GM12878 (cell line): ENCODE measurements at regions of chr1 and their contacts with region 1.

Region 1: GRCh38 chr1:91803847-91804545 is 82.0 kb downstream of the TGFBR3 start:
- DNase-seq: peak; percentile 95
- ATAC-seq: peak; percentile 87
- H3K4me3 ChIP-seq: no peak overlapping the region
- H3K27ac ChIP-seq: peak overlapping the region; percentile 81
- H3K4me1 ChIP-seq: peaks cover 29% of the 10 kb centered on the region
- H3K27me3 ChIP-seq: no peaks in the 10 kb centered on the region
- CTCF ChIP-seq: no peak
- EP300 ChIP-seq: peak in 1 of 2 experiments; percentile 26; a peak in 2 of 4 replicates
- POLR2A ChIP-seq: peak; percentile 51
- RAD21 ChIP-seq: no peak

Region 2: DNA sequence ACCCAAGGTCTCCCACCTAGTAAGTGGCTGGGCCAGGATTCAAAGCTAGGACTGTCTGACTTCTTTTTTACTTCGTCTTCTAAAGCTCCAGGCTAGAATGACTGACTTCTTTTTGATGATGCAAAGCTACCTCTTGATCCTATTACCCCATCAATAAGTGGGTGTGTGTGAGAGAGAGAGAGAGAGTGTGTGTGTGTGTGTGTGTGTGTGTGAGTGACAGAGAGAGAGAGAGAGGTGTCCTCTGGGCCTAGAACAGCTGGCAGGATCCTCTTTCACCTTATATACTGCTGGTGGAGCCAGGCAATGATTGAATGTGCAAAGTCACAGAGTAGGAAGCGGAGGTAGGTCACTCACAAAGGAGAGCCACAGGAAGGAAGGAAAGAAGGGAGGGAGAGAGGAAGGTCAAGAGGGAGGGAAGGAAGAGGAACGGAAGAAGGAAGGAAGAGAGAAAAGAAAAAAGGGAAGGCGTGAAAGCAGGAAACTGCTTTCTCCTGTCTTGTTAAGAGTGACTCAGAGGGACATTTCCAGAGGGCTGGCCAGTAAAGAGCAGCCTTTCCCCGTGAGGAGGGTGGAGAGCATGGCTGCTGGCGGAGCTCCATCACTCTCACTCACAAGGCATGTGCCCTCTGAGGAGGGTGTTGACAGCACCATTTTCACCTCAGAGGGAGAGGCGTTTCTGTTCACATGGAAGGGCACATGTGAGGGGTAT is 234.4 kb before region 1 on chr1:
- CTCF ChIA-PET with region 1: no interaction called
- POLR2A ChIA-PET with region 1: no interaction called
- RAD21 ChIA-PET with region 1: no interaction called
- SMC1A ChIA-PET with region 1: no interaction called
- in situ Hi-C with region 1: no loop called
- intact Hi-C with region 1: loop called (anchors 5 kb)
- DNase-seq: no peak
- ATAC-seq: no peak
- H3K4me3 ChIP-seq: no peak overlapping the region
- H3K27ac ChIP-seq: no peak overlapping the region
- H3K4me1 ChIP-seq: peaks cover 12% of the 10 kb centered on the region
- H3K27me3 ChIP-seq: no peaks in the 10 kb centered on the region
- CTCF ChIP-seq: no peak
- EP300 ChIP-seq: no peak
- POLR2A ChIP-seq: no peak
- RAD21 ChIP-seq: no peak

Region 3: DNA sequence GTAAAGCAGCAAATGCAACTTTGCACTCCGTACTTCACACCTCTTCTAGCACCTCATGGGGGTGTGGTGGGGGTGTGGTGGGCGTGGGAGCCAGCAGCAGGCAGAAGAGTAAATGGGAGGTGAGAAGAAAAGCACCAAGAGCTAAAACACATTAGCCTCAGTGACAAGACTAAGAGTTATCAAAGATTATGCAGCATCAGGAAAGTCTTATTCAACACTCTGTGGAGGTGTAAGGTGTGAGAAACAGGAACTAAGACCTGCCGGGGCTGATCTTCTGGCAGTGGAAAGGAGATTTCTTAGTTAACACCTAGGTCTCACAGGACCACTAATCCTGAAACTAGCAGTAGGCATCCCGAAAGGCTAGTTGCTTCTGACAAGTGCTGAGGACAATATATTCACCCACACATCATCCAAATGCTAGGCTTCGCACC is 72.1 kb after region 1 on chr1:
- CTCF ChIA-PET with region 1: no interaction called
- POLR2A ChIA-PET with region 1: no interaction called
- RAD21 ChIA-PET with region 1: no interaction called
- SMC1A ChIA-PET with region 1: interaction called, 3 read pairs
- in situ Hi-C with region 1: no loop called
- intact Hi-C with region 1: loop called (anchors 2 kb)
- DNase-seq: peak; percentile 75
- ATAC-seq: peak; percentile 91
- H3K4me3 ChIP-seq: no peak overlapping the region
- H3K27ac ChIP-seq: peak overlapping the region; percentile 15; the same call in 1 of the 2 replicates
- H3K4me1 ChIP-seq: peaks cover 31% of the 10 kb centered on the region
- H3K27me3 ChIP-seq: no peaks in the 10 kb centered on the region
- CTCF ChIP-seq: no peak
- EP300 ChIP-seq: peak in 1 of 2 experiments; percentile 62; a peak in 1 of 4 replicates
- POLR2A ChIP-seq: no peak
- RAD21 ChIP-seq: no peak